ENCODE measurements at regions of chr11 and their contacts with region 1.

Region 1: DNA sequence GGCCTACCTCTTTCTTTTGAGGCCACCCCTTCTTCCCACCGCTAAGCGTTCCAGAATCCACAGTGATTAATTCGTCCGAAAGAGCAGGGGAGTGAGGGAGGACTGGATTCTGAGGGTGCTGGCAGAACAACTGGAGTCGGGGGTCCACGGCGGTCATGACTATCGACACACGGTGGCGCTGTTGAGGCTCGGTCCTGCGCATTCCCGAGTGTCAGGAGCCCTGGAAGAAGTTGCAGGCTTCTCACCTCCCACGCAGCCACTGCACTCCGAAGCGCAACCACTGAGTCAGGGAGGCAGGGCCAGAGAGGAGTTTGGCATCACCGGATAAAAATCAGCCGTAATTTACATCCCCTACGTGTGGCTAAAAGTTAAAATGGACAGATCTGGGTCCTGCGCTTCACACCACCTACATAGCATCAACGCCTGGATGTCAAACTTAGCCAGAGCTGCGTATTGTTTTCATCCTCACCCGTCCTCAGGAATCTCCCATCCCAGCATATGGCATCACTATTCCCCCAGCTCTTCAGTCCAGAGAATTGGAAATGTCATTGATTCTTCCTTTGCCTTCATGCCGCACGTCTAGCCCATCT is 10.7 kb upstream of the CTSF start:
- DNase-seq: peak; percentile 50 to 61
- ATAC-seq: peak; percentile 68 to 91
- H3K4me3 ChIP-seq: no peak overlapping the region
- H3K27ac ChIP-seq: no peak overlapping the region
- H3K4me1 ChIP-seq: no peaks in the 10 kb centered on the region
- H3K27me3 ChIP-seq: no peaks in the 10 kb centered on the region
- CTCF ChIP-seq: peak; percentile 77 to 85 (median 83)
- POLR2A ChIP-seq: no peak

Region 2: DNA sequence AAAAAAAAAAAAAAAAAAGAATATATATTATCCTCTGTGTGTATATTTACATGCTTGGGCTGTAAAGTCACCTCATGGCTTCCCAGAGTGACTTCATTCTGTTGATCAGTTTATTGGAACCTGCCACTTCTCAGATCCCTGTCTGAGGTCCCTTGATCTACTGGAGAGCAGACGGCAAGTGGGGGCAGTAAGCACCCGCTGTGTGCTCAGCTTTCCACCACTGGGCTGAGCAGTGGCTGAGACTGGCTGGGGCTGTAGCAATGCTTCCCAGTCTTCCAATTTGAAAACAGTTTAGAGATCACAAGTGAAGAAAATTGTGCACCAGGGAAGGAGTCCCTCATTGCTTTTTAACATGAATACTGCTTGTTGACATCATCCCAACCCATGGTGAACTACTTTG is 105.5 kb after region 1 on chr11:
- in situ Hi-C with region 1: loop called (anchors 5 to 10 kb)
- intact Hi-C with region 1: no loop called
- DNase-seq: no peak
- ATAC-seq: no peak
- H3K4me3 ChIP-seq: no peak overlapping the region
- H3K27ac ChIP-seq: no peak overlapping the region
- H3K4me1 ChIP-seq: no peaks in the 10 kb centered on the region
- H3K27me3 ChIP-seq: no peaks in the 10 kb centered on the region
- CTCF ChIP-seq: no peak
- POLR2A ChIP-seq: no peak

Measured in gastrocnemius medialis (tissue), 4 donors.